Gastrocnemius medialis (tissue), 4 donors: ENCODE measurements at regions of chr1 and their contacts with region 1.

Region 1: DNA sequence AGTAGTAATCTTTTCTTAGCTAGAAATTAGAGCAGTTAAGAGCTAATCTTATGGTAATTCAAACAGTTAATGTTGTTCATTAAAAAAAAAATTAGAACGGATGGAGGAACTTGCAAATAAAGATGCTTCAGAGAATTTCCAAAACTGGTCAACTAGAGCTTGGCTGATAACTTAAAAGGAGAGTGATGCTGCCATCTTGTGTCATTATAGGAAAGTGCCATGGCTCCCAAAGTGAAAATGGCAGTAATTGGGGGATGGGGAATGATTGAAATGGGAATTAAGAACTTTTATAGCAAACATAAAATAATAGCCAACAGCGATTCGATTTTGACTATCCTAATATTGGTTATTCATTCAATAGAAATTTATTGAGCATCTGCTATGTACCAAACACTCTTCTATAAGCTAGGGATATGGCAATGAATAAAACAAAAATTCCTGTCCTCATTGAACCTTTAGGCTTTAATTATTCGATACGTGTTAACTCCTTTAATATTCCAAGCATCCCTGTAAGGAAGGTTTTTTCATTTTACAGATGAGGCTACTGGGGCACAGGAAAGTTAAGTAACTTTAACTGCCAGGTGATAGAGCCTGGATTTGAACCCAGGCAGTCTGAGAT is 5.7 kb upstream of the PLPP3 start:
- DNase-seq: no peak
- ATAC-seq: peak; percentile 72 to 88
- H3K4me3 ChIP-seq: no peak overlapping the region
- H3K27ac ChIP-seq: no peak overlapping the region
- H3K4me1 ChIP-seq: peaks cover 10 to 14% of the 10 kb centered on the region in 2 donors
- H3K27me3 ChIP-seq: no peaks in the 10 kb centered on the region
- CTCF ChIP-seq: peak; percentile 69 to 93 (median 84)
- POLR2A ChIP-seq: no peak

Region 2: GRCh38 chr1:55140546-55140983 is 1444.5 kb before region 1 on chr1:
- in situ Hi-C with region 1: loop called (anchors 5 to 25 kb)
- intact Hi-C with region 1: loop called (anchors 5 kb)
- DNase-seq: peak; percentile 64 to 65
- ATAC-seq: peak; percentile 87 to 96
- H3K4me3 ChIP-seq: no peak overlapping the region
- H3K27ac ChIP-seq: peak overlapping the region in 3 of 4 donors; percentile 40 to 48 (median 45)
- H3K4me1 ChIP-seq: peaks cover 0 to 4% of the 10 kb centered on the region in 2 donors
- H3K27me3 ChIP-seq: no peaks in the 10 kb centered on the region
- CTCF ChIP-seq: peak; percentile 69 to 91 (median 78)
- POLR2A ChIP-seq: no peak

Region 3: DNA sequence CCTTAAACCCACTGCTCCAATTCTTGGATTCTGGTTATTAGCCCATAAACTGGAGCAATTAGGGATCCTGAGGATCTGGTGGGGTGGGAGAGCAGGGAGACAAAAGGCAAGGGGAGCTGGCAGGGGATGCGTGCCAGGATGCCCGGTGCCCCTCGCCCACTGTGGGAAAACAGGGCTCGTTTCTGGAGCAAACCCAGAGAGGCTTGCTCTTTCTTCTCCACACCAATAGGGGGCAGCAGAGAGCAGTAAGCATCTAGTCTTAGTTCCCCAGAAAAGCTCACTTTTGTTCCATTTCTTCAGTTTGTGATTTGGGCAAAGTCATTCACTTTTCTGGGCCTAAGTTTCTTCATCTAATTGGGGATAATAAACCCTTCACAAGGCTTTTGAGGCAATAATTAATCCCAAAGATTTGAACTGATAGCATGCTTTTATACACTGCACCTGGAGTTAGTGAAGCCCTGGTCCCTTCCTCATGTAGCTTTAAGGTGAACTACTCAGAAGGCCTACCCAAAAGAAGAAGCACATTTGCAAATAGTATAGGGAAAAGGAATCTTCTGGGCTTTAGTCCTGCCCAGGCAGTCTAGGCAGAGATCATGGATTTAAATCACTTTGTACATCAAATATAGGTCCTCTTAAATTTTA is 1209.3 kb before region 1 on chr1:
- in situ Hi-C with region 1: loop called in 3 of 4 experiments (anchors 5 to 10 kb)
- intact Hi-C with region 1: loop called (anchors 1 kb)
- DNase-seq: no peak
- ATAC-seq: peak in 1 of 2 donors; percentile 42
- H3K4me3 ChIP-seq: no peak overlapping the region
- H3K27ac ChIP-seq: peak overlapping the region; percentile 9 to 48 (median 45)
- H3K4me1 ChIP-seq: peaks cover 0 to 3% of the 10 kb centered on the region in 2 donors
- H3K27me3 ChIP-seq: no peaks in the 10 kb centered on the region
- CTCF ChIP-seq: peak; percentile 62 to 96 (median 84)
- POLR2A ChIP-seq: no peak

Region 4: GRCh38 chr1:56409094-56409691 is 175.8 kb before region 1 on chr1:
- in situ Hi-C with region 1: loop called in 1 of 4 experiments (anchors 10 kb)
- intact Hi-C with region 1: loop called (anchors 1 kb)
- DNase-seq: peak in 1 of 2 donors; percentile 30
- ATAC-seq: peak in 1 of 2 donors; percentile 54
- H3K4me3 ChIP-seq: no peak overlapping the region
- H3K27ac ChIP-seq: no peak overlapping the region
- H3K4me1 ChIP-seq: no peaks in the 10 kb centered on the region
- H3K27me3 ChIP-seq: no peaks in the 10 kb centered on the region
- CTCF ChIP-seq: peak; percentile 21 to 72 (median 41)
- POLR2A ChIP-seq: no peak

Region 5: DNA sequence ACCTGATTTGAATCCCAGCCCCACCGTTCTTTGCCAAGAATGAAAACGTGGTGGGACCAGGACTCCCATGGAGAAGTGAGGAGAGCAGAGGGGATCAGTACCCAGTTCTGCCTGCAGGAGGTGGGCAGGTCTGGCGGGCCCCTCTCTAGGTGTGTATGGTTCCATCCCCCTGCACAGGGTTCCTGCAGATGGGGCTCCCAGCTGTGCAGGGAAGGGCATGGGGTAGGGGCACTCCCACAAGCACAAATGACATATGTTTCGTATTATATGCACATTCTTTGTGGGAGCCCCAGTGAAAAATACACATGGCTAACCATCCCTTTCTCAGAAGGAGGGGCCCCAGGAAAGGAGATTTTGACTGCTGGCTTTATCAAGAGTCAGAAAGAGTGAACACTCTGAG is 150.3 kb before region 1 on chr1:
- in situ Hi-C with region 1: no loop called
- intact Hi-C with region 1: no loop called
- DNase-seq: no peak
- ATAC-seq: no peak
- H3K4me3 ChIP-seq: no peak overlapping the region
- H3K27ac ChIP-seq: no peak overlapping the region
- H3K4me1 ChIP-seq: peaks cover 14 to 31% of the 10 kb centered on the region in 2 donors
- H3K27me3 ChIP-seq: no peaks in the 10 kb centered on the region
- CTCF ChIP-seq: no peak
- POLR2A ChIP-seq: no peak

Region 6: GRCh38 chr1:56547953-56548352 is 37.1 kb before region 1 on chr1:
- in situ Hi-C with region 1: no loop called
- intact Hi-C with region 1: no loop called
- DNase-seq: peak; percentile 51 to 77
- ATAC-seq: peak; percentile 80 to 88
- H3K4me3 ChIP-seq: no peak overlapping the region
- H3K27ac ChIP-seq: peak overlapping the region; percentile 31 to 73 (median 48)
- H3K4me1 ChIP-seq: peaks cover 80 to 87% of the 10 kb centered on the region in 2 donors
- H3K27me3 ChIP-seq: no peaks in the 10 kb centered on the region
- CTCF ChIP-seq: no peak
- POLR2A ChIP-seq: no peak